GM10248 (cell line): ENCODE measurements at regions of chr2 and their contacts with region 1.

Region 1: DNA sequence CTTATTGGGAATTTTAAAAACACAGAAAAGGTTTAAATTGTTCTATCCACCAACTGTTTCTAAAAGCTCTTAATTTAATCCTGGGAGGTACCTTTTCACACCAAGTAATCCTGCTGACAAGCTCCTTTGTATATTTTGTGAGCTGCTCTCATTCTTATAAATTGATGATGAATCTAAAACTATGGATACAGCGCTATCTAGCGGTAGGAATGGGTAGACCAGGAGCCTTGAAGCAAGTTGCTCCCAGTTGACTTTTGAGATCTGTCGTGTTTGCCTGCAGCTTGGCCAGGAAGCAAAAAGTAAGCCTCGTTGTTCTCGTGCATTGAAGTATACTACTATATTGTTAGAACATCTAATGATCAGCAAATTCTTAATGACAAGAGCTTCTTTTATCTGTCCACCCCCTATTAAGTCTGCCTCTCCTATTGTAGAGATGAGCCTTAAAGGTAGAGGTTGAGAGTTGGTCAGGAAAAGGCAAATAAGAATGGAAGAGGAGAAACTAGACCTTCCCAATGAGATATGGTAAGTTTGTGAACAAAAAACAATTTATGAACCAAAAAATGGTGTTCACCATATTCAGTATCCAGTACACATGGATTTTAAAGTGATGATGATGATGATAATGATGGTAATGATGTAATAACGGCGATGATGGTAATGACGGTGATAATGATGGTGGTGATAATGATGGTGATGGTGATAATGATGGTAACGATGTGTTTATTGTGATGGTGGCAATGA is 212.0 kb upstream of the NCKAP5 start:
- DNase-seq: peak; percentile 22
- CTCF ChIP-seq: peak; percentile 57

Region 2: DNA sequence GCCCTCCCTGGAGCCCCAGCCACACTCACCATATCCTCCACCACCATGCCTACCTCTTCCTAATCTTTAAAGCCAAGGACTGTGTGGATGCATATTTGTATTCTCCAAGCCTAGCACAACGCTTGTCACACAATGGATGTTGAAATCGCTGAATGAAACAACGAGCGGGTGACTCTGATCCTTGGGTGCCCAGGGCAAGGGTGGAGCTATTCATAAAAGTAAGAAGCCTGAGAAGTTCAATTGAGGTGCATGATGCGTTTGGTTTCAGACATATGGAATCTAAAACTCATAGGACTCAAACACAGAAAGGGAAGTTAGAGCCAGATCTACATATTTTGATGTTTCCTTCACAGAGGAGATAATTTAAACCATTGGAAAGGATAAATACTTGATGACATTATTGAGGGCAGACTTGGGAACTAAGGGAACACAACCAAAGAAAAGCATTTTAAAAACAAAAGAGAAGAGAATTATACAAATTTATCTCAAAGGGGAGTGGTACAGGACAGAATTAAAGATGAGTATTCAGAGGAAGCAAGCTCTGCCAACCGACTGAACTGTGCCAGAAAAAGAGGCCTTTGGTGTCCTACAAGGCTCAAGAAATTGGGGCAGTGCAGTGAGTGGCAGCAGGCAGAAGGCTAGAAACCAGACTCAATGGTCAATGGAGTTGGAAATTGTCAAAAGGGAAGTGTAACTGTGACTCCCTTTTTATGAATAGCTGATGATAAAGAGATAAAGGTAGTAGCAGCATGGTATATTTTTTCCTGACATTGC is 11.4 kb before region 1 on chr2:
- CTCF ChIA-PET with region 1: interaction called, 12 read pairs
- POLR2A ChIA-PET with region 1: no interaction called
- DNase-seq: no peak
- CTCF ChIP-seq: no peak